Ascending aorta (tissue), 2 donors: ENCODE measurements at regions of chr15 and their contacts with region 1.

Region 1: DNA sequence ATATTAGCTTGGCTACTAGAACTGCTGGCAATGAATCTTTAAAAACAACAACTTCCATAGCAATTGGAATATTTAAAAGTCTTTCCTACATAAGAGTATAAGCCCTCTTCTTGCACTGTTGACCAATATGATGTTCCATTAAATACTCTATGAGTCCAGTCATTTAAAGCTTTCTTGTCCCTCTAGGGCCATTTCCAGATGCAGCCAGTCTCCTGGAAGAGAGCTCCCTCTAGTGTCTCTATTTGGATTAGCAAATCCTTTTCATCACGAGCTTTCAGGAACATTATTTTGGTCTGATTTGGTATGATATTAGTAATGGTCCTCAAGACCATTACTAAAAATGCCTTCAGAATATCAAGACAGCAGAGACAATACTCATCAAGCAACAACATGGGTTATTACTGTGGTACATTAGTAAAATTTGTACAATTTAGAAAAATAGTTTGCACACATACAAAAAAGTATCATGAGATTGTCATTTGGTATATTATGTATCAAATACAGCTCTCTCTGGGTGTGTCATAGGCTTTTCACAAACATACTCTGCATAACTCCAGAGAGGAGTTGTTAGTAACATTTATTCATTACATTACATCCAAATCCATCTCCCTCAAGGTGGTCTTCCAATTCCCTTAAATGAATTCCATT is 101.3 kb downstream of the DPH6 start:
- DNase-seq: no peak
- H3K4me3 ChIP-seq: no peak overlapping the region
- H3K27ac ChIP-seq: no peak overlapping the region
- H3K4me1 ChIP-seq: peaks cover 0 to 6% of the 10 kb centered on the region in 2 donors
- H3K27me3 ChIP-seq: no peaks in the 10 kb centered on the region
- CTCF ChIP-seq: peak; percentile 15 to 68 (median 49)

Region 2: DNA sequence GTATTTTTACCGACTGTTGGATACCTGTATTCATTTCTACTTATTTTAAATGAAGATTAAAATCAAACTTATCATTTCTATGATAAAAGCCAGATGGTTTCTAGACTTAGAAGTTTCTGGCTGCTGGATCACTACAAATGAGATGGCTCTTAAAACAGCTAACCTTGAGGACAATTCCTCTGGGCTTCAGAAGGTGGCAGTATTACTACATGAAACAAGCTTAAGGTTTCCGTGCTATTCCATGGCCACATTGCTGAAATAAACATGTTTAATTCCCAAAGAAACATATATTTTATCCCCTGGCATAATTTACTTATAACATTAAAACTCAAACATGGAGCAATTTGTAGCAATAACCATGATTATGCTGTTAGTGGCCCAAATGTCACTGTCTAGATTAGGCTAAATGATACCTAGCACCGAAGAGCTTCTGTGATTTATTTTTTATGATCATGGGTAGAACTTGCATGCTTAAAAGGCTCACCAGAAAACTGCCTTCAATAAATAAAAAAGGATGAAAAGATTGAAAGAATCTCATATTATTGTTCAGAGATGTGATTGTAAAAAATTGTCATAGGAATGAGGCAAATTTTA is 155.6 kb before region 1 on chr15:
- intact Hi-C with region 1: loop called (anchors 2 kb)
- DNase-seq: no peak
- H3K4me3 ChIP-seq: no peak overlapping the region
- H3K27ac ChIP-seq: no peak overlapping the region
- H3K4me1 ChIP-seq: peaks cover 0 to 2% of the 10 kb centered on the region in 2 donors
- H3K27me3 ChIP-seq: no peaks in the 10 kb centered on the region
- CTCF ChIP-seq: peak; percentile 39 to 78 (median 60)

Region 3: GRCh38 chr15:35376707-35377106 is 68.0 kb before region 1 on chr15:
- intact Hi-C with region 1: no loop called
- DNase-seq: no peak
- H3K4me3 ChIP-seq: no peak overlapping the region
- H3K27ac ChIP-seq: no peak overlapping the region
- H3K4me1 ChIP-seq: peaks cover 0 to 2% of the 10 kb centered on the region in 2 donors
- H3K27me3 ChIP-seq: no peaks in the 10 kb centered on the region
- CTCF ChIP-seq: no peak

Region 4: GRCh38 chr15:35583863-35584528 is 139.3 kb after region 1 on chr15:
- intact Hi-C with region 1: no loop called
- DNase-seq: no peak
- H3K4me3 ChIP-seq: no peak overlapping the region
- H3K27ac ChIP-seq: peak overlapping the region; percentile 50 to 61
- H3K4me1 ChIP-seq: peaks cover 4 to 8% of the 10 kb centered on the region in 2 donors
- H3K27me3 ChIP-seq: no peaks in the 10 kb centered on the region
- CTCF ChIP-seq: no peak